ENCODE measurements at regions of chr1 and their contacts with region 1.

Region 1: DNA sequence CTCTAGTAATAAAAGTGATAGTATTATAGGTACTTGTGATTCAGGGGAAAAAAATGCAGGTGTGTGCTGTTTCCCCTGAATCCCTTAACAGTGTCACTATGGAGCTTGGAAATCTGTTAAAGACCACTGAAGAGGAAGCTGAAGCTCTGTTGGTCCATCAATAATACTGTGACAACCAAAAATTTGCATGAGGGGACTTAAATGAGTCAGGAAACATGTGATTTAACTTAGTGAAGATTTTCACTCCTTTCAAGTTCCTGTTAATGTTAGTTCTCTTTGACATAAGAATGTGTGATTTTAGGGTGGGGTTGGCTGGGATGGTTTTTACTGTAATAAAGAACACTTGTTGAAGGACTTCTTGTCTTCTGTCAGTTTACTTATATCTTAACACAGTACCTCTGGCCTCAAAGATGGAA is 32.0 kb downstream of the VANGL2 start:
- DNase-seq: no peak
- H3K4me3 ChIP-seq: no peak overlapping the region
- H3K27ac ChIP-seq: no peak overlapping the region
- H3K4me1 ChIP-seq: peaks cover 7 to 17% (median 9%) of the 10 kb centered on the region in 3 donors
- H3K27me3 ChIP-seq: no peaks in the 10 kb centered on the region
- CTCF ChIP-seq: no peak
- POLR2A ChIP-seq: no peak

Region 2: DNA sequence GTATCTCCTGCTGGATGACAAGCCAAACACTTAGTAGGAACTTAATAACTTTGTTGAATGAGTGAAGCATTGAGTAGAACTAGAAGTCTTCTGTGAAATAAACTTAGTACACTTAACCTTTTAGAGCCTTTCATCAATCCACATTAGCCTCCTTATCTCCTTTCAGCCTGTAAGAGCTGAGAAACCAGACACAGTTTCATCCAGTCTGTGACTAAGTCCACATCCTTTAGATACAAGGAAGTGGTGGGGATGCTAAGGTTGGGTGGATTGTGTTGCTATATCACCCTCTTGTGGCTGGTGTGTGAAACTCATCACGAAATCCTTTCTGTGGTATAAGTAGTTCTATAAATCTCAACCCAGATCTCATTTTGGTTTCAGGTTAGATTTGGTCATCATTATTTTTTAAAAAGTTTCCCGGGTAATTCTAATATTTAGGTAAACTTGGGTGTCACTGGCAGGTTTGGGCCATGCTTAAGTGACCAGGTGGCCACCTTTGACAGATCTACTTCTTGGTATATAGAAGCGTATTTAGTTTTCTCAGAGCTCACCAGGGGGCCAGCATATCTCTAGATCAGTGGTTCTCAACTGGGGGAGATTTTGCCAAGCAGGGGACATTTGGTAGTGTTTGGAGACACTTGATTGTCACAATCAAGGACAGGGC is 174.8 kb after region 1 on chr1:
- intact Hi-C with region 1: loop called (anchors 5 kb)
- DNase-seq: no peak
- H3K4me3 ChIP-seq: no peak overlapping the region
- H3K27ac ChIP-seq: no peak overlapping the region
- H3K4me1 ChIP-seq: no peaks in the 10 kb centered on the region
- H3K27me3 ChIP-seq: peaks cover 0 to 16% (median 0%) of the 10 kb centered on the region in 4 donors
- CTCF ChIP-seq: peak; percentile 57 to 83 (median 68)
- POLR2A ChIP-seq: no peak

Measured in esophagus squamous epithelium (tissue), 5 donors.